ENCODE measurements at regions of chr7 and their contacts with region 1.

Region 1: GRCh38 chr7:121994625-121995410 is 121.9 kb downstream of the PTPRZ1 start:
- DNase-seq: peak; percentile 16 to 19
- ATAC-seq: peak in 5 of 8 donors; percentile 60 to 73 (median 69)
- H3K4me3 ChIP-seq: no peak overlapping the region
- H3K27ac ChIP-seq: no peak overlapping the region
- H3K4me1 ChIP-seq: no peaks in the 10 kb centered on the region
- H3K27me3 ChIP-seq: peaks cover 0 to 5% (median 0%) of the 10 kb centered on the region in 7 donors
- CTCF ChIP-seq: peak; percentile 12 to 66 (median 47)

Region 2: DNA sequence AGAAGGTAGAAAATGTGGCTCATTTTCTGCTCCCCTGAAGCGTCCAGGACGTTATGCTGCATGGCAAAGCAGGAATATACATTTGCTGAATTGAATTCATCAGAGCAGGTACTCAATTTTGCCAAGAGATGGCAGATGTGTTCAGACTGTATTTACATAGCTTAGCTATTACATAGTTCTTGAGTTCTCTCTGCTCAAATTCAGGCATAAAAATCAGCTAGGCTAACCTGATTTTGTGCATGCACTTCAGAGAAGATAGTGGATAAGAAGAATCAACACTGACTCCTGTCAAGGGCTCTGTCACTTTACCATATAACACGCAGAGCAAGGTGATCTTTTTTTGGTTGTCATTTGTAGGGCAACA is 389.5 kb before region 1 on chr7:
- intact Hi-C with region 1: loop called in 2 of 10 experiments (anchors 5 kb)
- DNase-seq: no peak
- ATAC-seq: no peak
- H3K4me3 ChIP-seq: no peak overlapping the region
- H3K27ac ChIP-seq: peak overlapping the region in 2 of 10 donors; percentile 20 to 23
- H3K4me1 ChIP-seq: peaks cover 0 to 12% (median 0%) of the 10 kb centered on the region in 9 donors
- H3K27me3 ChIP-seq: no peaks in the 10 kb centered on the region
- CTCF ChIP-seq: peak in 2 of 9 donors; percentile 15 to 29

Region 3: DNA sequence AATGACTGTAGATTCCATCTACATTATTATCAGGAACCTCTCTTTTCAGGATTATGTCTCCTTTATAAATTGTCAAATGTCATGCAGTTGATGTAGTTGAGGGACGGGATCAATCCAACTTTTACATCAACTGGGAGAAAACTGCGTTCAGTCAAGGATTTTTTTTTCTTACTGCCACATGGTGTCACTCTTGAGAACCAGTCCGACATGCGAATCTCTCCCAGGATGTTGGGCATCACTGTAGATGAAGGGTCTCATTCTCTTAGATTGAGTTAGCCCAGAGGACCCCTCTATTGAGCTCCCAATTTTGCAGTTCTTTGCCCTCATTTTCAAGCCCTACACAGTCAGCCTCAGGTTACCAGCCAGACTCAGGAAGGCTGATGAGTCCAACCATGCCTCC is 242.1 kb before region 1 on chr7:
- intact Hi-C with region 1: loop called in 1 of 10 experiments (anchors 10 kb)
- DNase-seq: no peak
- ATAC-seq: no peak
- H3K4me3 ChIP-seq: no peak overlapping the region
- H3K27ac ChIP-seq: no peak overlapping the region
- H3K4me1 ChIP-seq: no peaks in the 10 kb centered on the region
- H3K27me3 ChIP-seq: peaks cover 0 to 19% (median 0%) of the 10 kb centered on the region in 7 donors
- CTCF ChIP-seq: peak in 3 of 9 donors; percentile 10 to 18 (median 17)

Region 4: GRCh38 chr7:122867471-122867980 is 872.7 kb after region 1 on chr7:
- intact Hi-C with region 1: no loop called
- DNase-seq: no peak
- ATAC-seq: no peak
- H3K4me3 ChIP-seq: no peak overlapping the region
- H3K27ac ChIP-seq: peak overlapping the region in 1 of 10 donors; percentile 22
- H3K4me1 ChIP-seq: peaks cover 0 to 16% (median 3%) of the 10 kb centered on the region in 9 donors
- H3K27me3 ChIP-seq: no peaks in the 10 kb centered on the region
- CTCF ChIP-seq: no peak

Measured in heart right ventricle (tissue), 16 donors.